PC-9 (cell line): ENCODE measurements at regions of chr21 and their contacts with region 1.

Region 1: DNA sequence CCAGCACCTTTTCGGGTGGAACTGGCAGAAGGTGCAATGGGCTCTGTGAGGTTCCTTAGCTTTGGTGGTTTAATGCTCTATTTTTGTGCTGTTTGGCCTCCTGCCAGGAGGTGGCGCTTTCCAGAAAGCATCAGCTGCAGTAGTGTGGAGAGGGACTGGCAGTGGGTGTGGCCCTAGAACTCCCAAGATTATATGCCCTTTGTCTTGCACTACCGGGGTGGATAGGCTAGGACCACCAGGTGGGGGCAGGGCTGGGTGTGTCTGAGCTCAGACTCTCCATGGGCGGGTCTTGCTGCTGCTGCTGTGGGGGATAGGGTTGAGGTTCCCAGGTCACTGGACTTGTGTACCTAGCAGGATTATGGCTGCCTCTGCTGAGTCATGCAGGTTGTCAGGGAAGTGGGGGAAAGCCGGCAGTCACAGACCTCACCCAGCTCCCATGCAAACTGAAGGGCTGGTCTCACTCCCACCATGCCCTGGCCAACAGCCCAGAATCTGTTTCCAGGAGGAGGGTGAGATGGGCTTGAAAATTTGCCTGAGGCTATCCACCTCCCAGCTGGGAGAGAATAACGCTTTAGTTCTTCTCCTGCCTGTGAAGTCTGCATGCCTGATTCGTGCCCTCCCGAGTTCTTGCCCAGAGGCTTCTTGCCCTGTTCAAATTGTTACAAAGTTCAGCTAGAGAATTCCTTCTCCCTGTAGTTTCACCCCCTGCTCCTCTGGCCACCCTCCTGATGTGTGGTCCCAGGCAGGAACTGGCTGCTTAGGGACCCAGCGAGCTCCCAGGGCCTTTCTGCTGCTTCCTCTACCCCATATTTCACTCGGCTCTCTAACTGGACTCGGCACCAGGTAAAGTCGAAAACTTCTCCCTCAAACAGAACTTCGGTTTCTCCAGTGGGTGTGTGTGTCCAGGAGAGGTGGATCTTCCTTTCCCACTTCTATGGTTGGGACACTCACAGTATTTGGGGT is 76.5 kb upstream of the BTG3 start:
- DNase-seq: peak; percentile 89 to 90
- H3K4me3 ChIP-seq: peak overlapping the region; percentile 41; the same call in 1 of the 2 replicates
- H3K27ac ChIP-seq: peak overlapping the region; percentile 95
- H3K4me1 ChIP-seq: peaks cover 26% of the 10 kb centered on the region
- H3K27me3 ChIP-seq: no peaks in the 10 kb centered on the region
- CTCF ChIP-seq: peak; percentile 73

Region 2: DNA sequence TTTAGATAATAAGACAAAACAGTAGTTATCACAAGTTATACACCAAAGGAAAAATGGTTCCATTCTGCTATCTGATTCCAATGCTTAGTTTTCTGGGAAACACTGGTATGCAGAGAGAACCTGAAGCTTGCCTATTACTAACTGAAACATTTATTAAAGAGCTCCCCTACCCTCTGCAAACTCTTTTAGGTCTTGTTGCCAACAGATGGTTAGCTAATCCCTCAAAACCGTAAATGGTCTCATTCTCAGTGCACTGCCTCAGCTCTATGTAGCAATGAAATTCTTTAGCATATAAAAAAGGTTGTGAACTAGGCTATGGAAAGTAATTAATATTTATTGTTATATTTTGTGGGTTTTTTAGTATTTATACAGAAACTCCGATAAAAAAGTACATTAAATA is 109.6 kb after region 1 on chr21:
- CTCF ChIA-PET with region 1: no interaction called
- POLR2A ChIA-PET with region 1: no interaction called
- intact Hi-C with region 1: loop called (anchors 5 kb)
- DNase-seq: no peak
- H3K4me3 ChIP-seq: no peak overlapping the region
- H3K27ac ChIP-seq: no peak overlapping the region
- H3K4me1 ChIP-seq: no peaks in the 10 kb centered on the region; the same call in 1 of the 2 replicates
- H3K27me3 ChIP-seq: no peaks in the 10 kb centered on the region
- CTCF ChIP-seq: no peak

Region 3: DNA sequence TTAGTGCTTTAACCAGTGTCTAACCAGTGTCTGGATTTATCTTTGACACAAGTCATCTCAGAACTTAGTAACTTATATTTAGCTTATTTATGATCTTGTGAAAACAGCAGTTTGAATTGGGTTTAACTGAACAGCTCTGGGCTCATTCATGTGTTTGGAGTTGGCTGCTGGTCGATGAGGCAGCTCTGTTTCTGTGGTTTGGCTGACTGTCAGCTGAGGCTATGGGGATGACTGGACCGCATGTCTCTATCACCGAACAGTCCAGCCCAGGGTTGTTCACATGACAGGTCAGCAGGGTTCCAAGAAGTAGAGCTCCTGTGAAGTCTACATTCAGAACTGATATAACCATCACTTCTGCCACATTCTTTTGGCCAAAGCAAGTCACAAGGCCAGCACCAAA is 159.0 kb after region 1 on chr21:
- CTCF ChIA-PET with region 1: no interaction called
- POLR2A ChIA-PET with region 1: no interaction called
- intact Hi-C with region 1: loop called (anchors 1 kb)
- DNase-seq: peak in 1 of 2 experiments; percentile 16
- H3K4me3 ChIP-seq: no peak overlapping the region
- H3K27ac ChIP-seq: no peak overlapping the region
- H3K4me1 ChIP-seq: peaks cover 9% of the 10 kb centered on the region; the same call in 1 of the 2 replicates
- H3K27me3 ChIP-seq: no peaks in the 10 kb centered on the region
- CTCF ChIP-seq: no peak